ENCODE measurements at regions of chr2 and their contacts with region 1.

Region 1: GRCh38 chr2:65420712-65421431 is 11.5 kb downstream of the SPRED2 start:
- DNase-seq: peak; percentile 34
- ATAC-seq: peak in 1 of 2 donors; percentile 63

Region 2: GRCh38 chr2:65300761-65301711 is 119.8 kb before region 1 on chr2:
- intact Hi-C with region 1: loop called in 1 of 2 experiments (anchors 10 kb)
- DNase-seq: peak; percentile 33
- ATAC-seq: peak; percentile 75 to 81

Region 3: DNA sequence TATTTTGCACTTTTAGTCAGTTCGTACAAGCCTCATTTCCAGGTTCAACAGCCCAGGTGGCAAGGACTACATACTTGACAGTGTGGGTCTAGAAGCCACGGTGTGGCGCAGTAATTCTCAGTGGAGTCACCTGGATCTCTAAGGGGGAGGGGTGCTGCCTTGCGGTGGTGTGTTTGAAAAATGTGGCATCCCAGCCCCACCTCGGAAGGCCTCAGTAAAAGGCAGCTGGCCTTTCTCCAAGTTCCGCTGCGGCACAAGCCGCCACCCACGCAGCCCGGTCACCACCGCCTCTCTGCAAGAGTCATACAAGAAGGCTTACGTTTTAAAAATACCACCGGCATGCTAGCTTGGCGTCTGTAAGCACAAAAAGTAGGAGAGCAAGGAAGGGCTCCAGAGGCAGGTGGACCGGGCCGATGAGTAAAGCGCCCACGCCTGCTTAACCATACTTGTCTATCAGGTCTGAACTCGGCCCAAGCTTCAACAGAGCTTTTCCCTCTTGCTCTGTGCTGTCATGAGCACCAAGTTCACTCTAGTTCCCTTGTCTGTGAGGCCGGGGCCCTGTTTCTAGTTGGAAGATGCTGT is 38.0 kb before region 1 on chr2:
- intact Hi-C with region 1: loop called in 1 of 2 experiments (anchors 5 kb)
- DNase-seq: peak; percentile 89
- ATAC-seq: peak; percentile 81 to 86